CD8-positive, alpha-beta T cell (primary cell): ENCODE measurements at regions of chrX and their contacts with region 1.

Region 1: GRCh38 chrX:63551856-63552255 is 200.7 kb upstream of the SPIN4 start:
- DNase-seq: no peak
- ATAC-seq: no peak
- H3K4me3 ChIP-seq: no peak overlapping the region
- H3K4me3 Mint-ChIP-seq: no peak overlapping the region
- H3K27ac ChIP-seq: no peak overlapping the region
- H3K27ac Mint-ChIP-seq: no peak overlapping the region
- H3K4me1 ChIP-seq: no peaks in the 10 kb centered on the region
- H3K4me1 Mint-ChIP-seq: peaks cover 2% of the 10 kb centered on the region
- H3K27me3 ChIP-seq: no peaks in the 10 kb centered on the region
- H3K27me3 Mint-ChIP-seq: no peaks in the 10 kb centered on the region
- CTCF ChIP-seq: no peak

Region 2: GRCh38 chrX:63613531-63614028 is 61.7 kb after region 1 on chrX:
- CTCF ChIA-PET with region 1: no interaction called
- POLR2A ChIA-PET with region 1: no interaction called
- intact Hi-C with region 1: no loop called
- DNase-seq: no peak
- ATAC-seq: no peak
- H3K4me3 ChIP-seq: no peak overlapping the region
- H3K4me3 Mint-ChIP-seq: no peak overlapping the region
- H3K27ac ChIP-seq: no peak overlapping the region
- H3K27ac Mint-ChIP-seq: no peak overlapping the region
- H3K4me1 ChIP-seq: no peaks in the 10 kb centered on the region
- H3K4me1 Mint-ChIP-seq: no peaks in the 10 kb centered on the region
- H3K27me3 ChIP-seq: no peaks in the 10 kb centered on the region
- H3K27me3 Mint-ChIP-seq: no peaks in the 10 kb centered on the region
- CTCF ChIP-seq: no peak

Region 3: GRCh38 chrX:65034668-65035445 is 1483.0 kb after region 1 on chrX:
- CTCF ChIA-PET with region 1: no interaction called
- POLR2A ChIA-PET with region 1: no interaction called
- intact Hi-C with region 1: loop called in 1 of 2 experiments (anchors 10 kb)
- DNase-seq: peak; percentile 59 to 89 (median 80)
- ATAC-seq: peak; percentile 85
- H3K4me3 ChIP-seq: peak within 1 kb of the TSS; percentile 64 to 66
- H3K4me3 Mint-ChIP-seq: peak within 1 kb of the TSS; percentile 94
- H3K27ac ChIP-seq: peak within 1 kb of the TSS; percentile 72 to 78
- H3K27ac Mint-ChIP-seq: peak within 1 kb of the TSS; percentile 96
- H3K4me1 ChIP-seq: peaks cover 10% of the 10 kb centered on the region
- H3K4me1 Mint-ChIP-seq: peaks cover 37% of the 10 kb centered on the region
- H3K27me3 ChIP-seq: no peaks in the 10 kb centered on the region
- H3K27me3 Mint-ChIP-seq: no peaks in the 10 kb centered on the region
- CTCF ChIP-seq: peak; percentile 46